ENCODE measurements at regions of chr19 and their contacts with region 1.

Region 1: DNA sequence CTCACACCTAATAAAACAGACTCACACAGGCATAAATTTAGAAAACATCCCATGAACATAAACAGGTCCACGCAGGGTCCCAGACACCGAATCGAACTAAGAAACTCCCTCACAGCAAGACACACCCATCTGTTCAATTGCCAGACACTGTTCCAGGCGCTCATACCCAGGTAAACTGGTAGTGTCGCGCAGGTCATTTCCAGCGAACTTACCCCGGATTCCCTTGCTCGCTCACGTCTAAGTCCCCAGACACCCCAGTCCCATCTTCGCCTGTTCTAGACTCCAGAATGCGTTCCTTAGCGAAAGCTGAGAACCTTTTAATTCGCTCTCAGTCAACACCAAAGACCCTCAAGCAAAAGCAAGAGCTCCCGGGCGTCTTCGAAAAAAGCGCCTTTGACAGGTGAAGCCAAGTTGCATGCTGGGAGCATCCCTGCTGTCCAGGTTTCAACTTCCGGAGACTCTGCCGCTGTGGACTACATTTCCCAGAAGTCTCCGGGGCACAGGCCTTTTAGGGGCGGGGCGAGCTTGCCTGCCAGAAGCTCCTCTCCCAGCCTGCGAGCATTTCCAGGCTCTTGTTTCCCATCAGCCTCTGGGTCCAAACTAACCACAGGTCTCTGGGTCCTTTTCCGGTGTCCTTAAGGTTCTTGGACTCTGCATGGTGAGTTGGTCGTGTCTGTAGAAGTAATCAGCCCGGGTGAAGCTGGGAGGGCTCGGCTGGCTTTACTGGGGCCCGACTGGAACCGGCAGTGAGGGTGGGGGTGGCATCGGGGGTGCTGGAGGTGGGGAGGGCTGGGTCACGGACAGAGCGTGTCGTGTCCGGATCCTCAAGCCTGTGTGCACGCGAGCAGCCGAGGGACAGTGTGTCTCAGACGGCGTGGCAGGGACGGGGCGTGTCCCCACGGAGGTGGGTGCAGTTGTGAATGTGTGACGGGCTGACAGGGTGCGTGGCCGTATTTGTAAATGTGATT is at the start of gene ZNF283:
- DNase-seq: peak; percentile 79 to 85
- ATAC-seq: peak; percentile 99 to 100
- H3K4me3 ChIP-seq: peak within 1 kb of the TSS; percentile 65 to 80 (median 72)
- H3K27ac ChIP-seq: peak within 1 kb of the TSS; percentile 71 to 77 (median 72)
- H3K4me1 ChIP-seq: peaks cover 4 to 6% of the 10 kb centered on the region in 2 donors
- H3K27me3 ChIP-seq: peaks cover 0 to 1% (median 0%) of the 10 kb centered on the region in 3 donors
- CTCF ChIP-seq: no peak
- POLR2A ChIP-seq: no peak
- total RNA-seq, gene ZNF283: 1.4 to 7.3 (median 2.1) TPM

Region 2: DNA sequence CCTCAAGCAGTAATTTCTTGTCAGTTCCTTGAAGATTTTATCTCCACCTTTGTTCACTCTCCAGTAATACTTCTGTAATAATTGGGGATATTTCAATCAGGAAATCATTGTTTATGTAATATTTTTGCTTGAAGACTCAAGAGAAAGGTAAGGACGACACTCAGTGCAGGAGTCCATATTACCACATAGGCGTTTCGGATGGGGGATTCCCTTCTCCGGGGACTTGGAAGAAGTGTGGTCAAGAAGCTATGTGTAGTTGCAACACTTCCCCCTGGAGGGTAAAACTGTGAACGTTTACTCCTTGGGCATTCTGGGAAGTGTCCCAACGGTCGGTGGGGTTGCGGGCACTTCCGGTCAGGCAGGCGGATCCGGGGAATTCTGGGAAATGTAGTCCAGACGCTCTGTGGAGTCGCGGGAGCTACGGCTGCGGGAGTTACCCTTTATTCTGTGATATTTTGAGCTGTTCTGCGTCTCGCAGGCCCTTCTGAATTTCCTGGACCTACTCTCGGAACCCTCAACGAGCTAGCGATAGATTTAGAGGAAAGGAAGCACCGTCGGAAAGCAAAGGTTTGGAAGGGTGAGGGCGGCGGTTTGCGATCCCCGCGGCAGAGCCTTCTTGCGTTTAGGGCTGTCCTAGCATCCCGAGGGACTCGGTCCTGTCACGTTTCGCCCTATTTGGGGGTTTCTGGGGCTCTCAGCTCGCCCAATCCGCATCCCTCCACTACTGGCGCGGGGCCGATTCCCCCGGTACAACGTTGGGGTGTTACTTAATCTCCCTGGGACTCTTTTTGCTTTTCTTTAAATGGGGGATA is 124.0 kb after region 1 on chr19 and contains the start of gene ZNF221:
- in situ Hi-C with region 1: loop called in 1 of 4 experiments (anchors 10 kb)
- intact Hi-C with region 1: no loop called
- DNase-seq: peak; percentile 87 to 90
- ATAC-seq: peak; percentile 100
- H3K4me3 ChIP-seq: peak within 1 kb of the TSS; percentile 70 to 97 (median 84)
- H3K27ac ChIP-seq: peak within 1 kb of the TSS; percentile 66 to 80 (median 74)
- H3K4me1 ChIP-seq: peaks cover 0 to 3% of the 10 kb centered on the region in 2 donors
- H3K27me3 ChIP-seq: no peaks in the 10 kb centered on the region
- CTCF ChIP-seq: peak in 4 of 5 experiments; percentile 19 to 48 (median 38)
- POLR2A ChIP-seq: no peak
- total RNA-seq, gene ZNF221: 0.76 to 15.3 (median 0.96) TPM

Region 3: GRCh38 chr19:44093931-44094765 is 267.1 kb after region 1 on chr19 and contains the start of gene ZNF224:
- in situ Hi-C with region 1: no loop called
- intact Hi-C with region 1: loop called (anchors 5 kb)
- DNase-seq: peak; percentile 85 to 87
- ATAC-seq: peak; percentile 100
- H3K4me3 ChIP-seq: peak within 1 kb of the TSS; percentile 76 to 91 (median 80)
- H3K27ac ChIP-seq: peak within 1 kb of the TSS; percentile 70 to 82 (median 73)
- H3K4me1 ChIP-seq: peaks cover 7 to 10% of the 10 kb centered on the region in 2 donors
- H3K27me3 ChIP-seq: no peaks in the 10 kb centered on the region
- CTCF ChIP-seq: no peak
- POLR2A ChIP-seq: peak in 1 of 2 donors; percentile 41
- total RNA-seq, gene ZNF224: 4.9 to 14.1 (median 6.9) TPM

Region 4: GRCh38 chr19:44356383-44357111 is 529.5 kb after region 1 on chr19 and contains the start of gene ZNF112:
- in situ Hi-C with region 1: no loop called
- intact Hi-C with region 1: loop called (anchors 1 kb)
- DNase-seq: peak; percentile 85 to 88
- ATAC-seq: peak; percentile 100
- H3K4me3 ChIP-seq: peak within 1 kb of the TSS; percentile 51 to 74 (median 65)
- H3K27ac ChIP-seq: peak within 1 kb of the TSS; percentile 46 to 68 (median 58)
- H3K4me1 ChIP-seq: peaks cover 8 to 9% of the 10 kb centered on the region in 2 donors
- H3K27me3 ChIP-seq: no peaks in the 10 kb centered on the region
- CTCF ChIP-seq: no peak
- POLR2A ChIP-seq: no peak
- total RNA-seq, gene ZNF112: 0.78 to 4.0 (median 1.6) TPM

Region 5: DNA sequence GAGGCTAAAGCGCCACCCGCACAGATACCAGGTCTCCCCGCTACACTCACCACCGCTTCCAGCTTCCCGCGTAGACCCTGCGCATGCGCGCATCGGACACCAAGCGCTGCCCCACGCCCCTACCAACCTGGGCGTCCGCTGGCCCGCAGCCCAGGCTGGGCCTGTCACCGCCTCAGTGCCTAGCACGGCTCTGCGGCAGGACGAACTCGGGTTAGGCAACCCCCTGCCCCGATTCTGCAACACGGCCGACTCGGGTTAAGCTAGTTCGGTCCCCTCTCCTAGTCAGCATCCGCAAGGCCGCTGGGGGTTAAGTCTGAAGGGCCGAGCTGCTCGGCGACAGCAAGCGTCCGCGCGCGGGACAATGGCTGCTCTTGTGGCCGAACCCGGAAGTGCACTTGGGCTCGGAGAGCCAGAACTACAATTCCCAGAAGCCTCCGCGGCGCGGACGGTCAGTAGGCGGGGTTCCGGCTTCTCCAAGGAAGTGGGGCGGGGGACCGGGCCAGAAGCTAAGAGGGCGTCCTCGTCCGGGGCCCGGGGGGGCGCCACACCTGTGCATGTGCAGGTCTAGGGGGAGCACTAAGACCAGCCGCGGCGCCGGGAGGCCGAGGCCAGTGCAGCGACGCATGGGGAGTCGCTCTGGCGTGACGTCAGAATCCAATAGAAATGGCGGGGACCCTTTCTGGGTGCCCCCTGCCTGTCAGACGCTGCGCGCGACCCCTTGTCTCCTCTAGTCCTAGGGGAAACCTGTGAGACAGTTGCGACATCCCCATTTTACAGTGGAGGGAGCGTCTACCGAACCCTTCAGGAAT is 673.3 kb after region 1 on chr19 and contains the start of gene ZNF180:
- in situ Hi-C with region 1: no loop called
- intact Hi-C with region 1: loop called (anchors 1 kb)
- DNase-seq: peak; percentile 87 to 89
- ATAC-seq: peak; percentile 99
- H3K4me3 ChIP-seq: peak within 1 kb of the TSS; percentile 77 to 99 (median 88)
- H3K27ac ChIP-seq: peak within 1 kb of the TSS; percentile 75 to 90 (median 82)
- H3K4me1 ChIP-seq: peaks cover 12 to 17% of the 10 kb centered on the region in 2 donors
- H3K27me3 ChIP-seq: no peaks in the 10 kb centered on the region
- CTCF ChIP-seq: peak; percentile 73 to 83 (median 80)
- POLR2A ChIP-seq: peak; percentile 58 to 64
- total RNA-seq, gene ZNF180: 2.1 to 17.4 (median 5.1) TPM

Region 6: DNA sequence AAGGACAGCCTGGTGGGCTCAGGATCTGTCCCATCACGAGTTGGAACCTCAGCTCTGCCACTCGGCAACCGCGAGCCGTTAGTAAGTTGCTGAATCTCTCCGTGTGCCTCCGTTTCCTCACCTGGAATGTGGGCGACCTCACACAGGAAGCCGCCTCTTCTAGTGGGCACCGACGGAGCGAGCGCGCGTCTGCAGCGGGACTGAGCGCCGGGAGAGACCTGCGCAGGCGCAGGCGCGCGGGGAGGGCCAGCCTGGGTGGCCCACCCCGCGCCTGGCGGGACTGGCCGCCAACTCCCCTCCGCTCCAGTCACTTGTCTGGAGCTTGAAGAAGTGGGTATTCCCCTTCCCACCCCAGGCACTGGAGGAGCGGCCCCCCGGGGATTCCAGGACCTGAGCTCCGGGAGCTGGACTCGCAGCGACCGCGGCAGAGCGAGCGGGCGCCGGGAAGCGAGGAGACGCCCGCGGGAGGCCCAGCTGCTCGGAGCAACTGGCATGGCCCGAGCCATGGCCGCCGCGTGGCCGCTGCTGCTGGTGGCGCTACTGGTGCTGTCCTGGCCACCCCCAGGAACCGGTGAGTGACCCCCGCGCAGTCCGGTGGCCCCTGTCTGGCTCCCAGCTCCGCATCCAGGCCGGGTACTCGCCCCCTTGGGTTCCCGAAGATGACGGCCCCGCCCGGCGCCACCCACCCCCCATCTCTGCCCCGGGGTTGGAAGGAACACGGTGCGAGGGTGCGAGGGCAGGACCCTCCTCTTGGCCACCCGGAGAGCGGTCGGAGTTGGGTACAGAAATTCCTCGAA is 816.7 kb after region 1 on chr19 and contains the start of gene PVR:
- in situ Hi-C with region 1: no loop called
- intact Hi-C with region 1: loop called (anchors 5 kb)
- DNase-seq: peak; percentile 45 to 72
- ATAC-seq: peak; percentile 72 to 76
- H3K4me3 ChIP-seq: peak within 1 kb of the TSS; percentile 75 to 98 (median 92)
- H3K27ac ChIP-seq: peak within 1 kb of the TSS; percentile 88 to 97 (median 95)
- H3K4me1 ChIP-seq: peaks cover 41 to 42% of the 10 kb centered on the region in 2 donors
- H3K27me3 ChIP-seq: no peaks in the 10 kb centered on the region
- CTCF ChIP-seq: peak in 1 of 5 experiments; percentile 13
- POLR2A ChIP-seq: peak; percentile 84 to 86
- total RNA-seq, gene PVR: 27.3 to 60.2 (median 33.9) TPM

Measured in gastrocnemius medialis (tissue), 4 donors.